Sciatic nerve (tissue), 2 donors: ENCODE measurements at regions of chr9 and their contacts with region 1.

Region 1: DNA sequence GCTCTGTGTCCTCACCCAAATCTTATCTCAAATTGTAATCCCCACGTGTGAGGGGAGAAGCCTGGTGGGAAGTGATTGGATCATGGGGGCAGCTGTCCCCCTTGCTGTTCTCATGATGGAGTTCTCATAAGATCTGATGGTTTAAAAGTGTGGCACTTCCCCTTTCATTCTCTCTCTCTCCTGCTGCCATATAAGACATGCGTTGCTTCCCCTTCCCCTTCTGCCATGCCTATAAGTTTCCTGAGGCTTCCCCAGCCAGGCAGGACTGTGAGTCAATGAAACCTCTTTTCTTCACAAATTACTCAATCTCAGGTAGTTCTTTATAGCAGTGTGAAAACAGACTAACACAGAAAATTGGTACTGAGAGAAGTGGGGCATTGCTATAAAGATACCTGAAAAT is 107.7 kb downstream of the DMAC1 start:
- DNase-seq: no peak
- ATAC-seq: no peak

Region 2: DNA sequence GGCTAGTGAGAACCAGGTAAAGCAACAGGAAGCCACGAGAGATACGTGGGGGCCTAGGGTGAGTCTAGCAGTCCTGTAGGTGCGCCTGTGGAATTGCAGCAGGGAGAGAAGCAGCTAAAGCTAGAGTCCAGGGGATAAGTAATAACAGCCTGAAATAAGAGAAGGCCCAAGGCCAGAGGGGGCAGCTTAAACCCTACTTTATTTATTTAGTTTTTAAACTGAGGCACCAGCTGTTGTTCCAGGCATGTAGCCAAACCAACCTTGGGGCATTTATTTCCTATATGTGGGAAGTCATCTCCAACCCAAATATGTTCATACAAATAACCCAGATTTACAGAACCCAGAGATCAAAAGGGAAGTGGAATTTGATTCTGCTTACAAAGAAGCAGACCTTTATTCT is 1139.9 kb before region 1 on chr9:
- intact Hi-C with region 1: no loop called
- DNase-seq: no peak
- ATAC-seq: no peak

Region 3: GRCh38 chr9:7756088-7756487 is 64.2 kb after region 1 on chr9:
- intact Hi-C with region 1: loop called (anchors 10 kb)
- DNase-seq: no peak
- ATAC-seq: no peak

Region 4: GRCh38 chr9:8745347-8745746 is 1053.4 kb after region 1 on chr9:
- intact Hi-C with region 1: loop called (anchors 5 kb)
- DNase-seq: no peak
- ATAC-seq: no peak